Body of pancreas (tissue), 4 donors: ENCODE measurements at regions of chr14 and their contacts with region 1.

Region 1: GRCh38 chr14:100239840-100240724 is 1.1 kb downstream of the YY1 start:
- DNase-seq: peak; percentile 85 to 92 (median 89)
- ATAC-seq: peak; percentile 64
- H3K4me3 ChIP-seq: peak overlapping the region; percentile 92 to 98
- H3K27ac ChIP-seq: peak overlapping the region; percentile 95 to 100 (median 96)
- H3K4me1 ChIP-seq: peaks cover 52% of the 10 kb centered on the region
- H3K27me3 ChIP-seq: no peaks in the 10 kb centered on the region
- CTCF ChIP-seq: peak; percentile 49 to 92 (median 75)
- POLR2A ChIP-seq: peak; percentile 19 to 68 (median 58)

Region 2: GRCh38 chr14:99821519-99822508 is 418.3 kb before region 1 on chr14:
- intact Hi-C with region 1: no loop called
- DNase-seq: peak in 1 of 4 donors; percentile 19
- ATAC-seq: peak; percentile 38
- H3K4me3 ChIP-seq: no peak overlapping the region
- H3K27ac ChIP-seq: no peak overlapping the region
- H3K4me1 ChIP-seq: peaks cover 4% of the 10 kb centered on the region
- H3K27me3 ChIP-seq: no peaks in the 10 kb centered on the region
- CTCF ChIP-seq: no peak
- POLR2A ChIP-seq: no peak

Region 3: DNA sequence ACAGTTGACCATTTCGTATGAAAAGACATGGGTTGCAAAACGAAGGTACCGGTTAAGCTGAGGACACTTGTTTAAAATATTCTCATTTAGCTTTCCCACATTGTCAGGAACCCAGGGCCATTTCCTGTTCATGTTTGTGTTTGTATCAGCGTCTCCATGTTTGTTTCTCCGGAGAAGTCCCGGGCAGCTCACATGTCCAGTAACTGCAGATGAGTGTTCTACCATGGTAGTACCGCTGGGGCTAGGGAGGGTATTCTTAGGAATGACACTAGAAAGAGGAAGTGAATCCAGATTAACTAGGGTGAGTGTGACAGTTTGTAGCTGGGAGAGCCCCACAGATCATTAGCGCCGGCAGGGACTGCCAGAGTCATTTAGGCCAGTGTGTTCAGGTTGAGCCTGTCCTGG is 224.8 kb before region 1 on chr14:
- intact Hi-C with region 1: no loop called
- DNase-seq: peak in 1 of 4 donors; percentile 7
- ATAC-seq: no peak
- H3K4me3 ChIP-seq: no peak overlapping the region
- H3K27ac ChIP-seq: no peak overlapping the region
- H3K4me1 ChIP-seq: peaks cover 16% of the 10 kb centered on the region
- H3K27me3 ChIP-seq: no peaks in the 10 kb centered on the region
- CTCF ChIP-seq: no peak
- POLR2A ChIP-seq: no peak

Region 4: DNA sequence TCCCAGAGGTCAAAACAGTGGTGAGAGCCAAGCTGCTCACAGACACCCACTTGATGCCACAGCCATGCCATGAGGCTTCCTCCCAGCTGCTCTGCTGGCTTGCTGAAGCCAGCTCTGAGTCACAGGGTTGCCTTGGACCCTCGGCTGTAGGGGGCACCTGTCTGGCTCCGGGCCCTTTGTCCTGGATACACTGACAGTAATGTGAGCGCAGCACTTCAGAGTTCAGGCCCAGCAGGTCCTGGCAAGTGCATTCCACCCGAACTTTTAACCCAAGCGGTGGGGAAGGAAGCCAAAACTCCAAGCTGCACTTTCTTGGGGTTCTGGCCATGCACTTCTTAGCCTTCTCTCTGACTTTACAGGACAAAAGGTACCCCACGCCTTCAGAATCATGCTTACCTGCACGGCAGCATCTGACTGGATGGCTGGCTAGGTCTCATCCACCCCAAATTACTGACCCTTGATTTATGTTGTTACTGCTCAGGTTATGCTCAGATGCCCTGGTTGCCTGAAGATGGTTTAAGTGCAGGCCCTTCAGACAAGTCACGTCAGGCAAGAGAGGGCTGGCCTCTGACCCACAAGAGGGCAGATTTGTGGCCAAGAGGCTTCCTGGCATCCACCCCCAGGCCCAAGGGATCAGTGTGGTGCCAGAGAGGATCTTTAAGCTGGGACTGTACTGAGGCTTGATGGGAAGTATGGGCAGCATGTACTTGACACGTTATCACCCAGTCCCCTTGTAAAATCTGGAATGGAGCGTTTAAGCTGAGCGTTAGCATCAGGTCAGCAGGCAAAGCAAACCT is 41.4 kb after region 1 on chr14:
- intact Hi-C with region 1: loop called (anchors 5 kb)
- DNase-seq: no peak
- ATAC-seq: no peak
- H3K4me3 ChIP-seq: no peak overlapping the region
- H3K27ac ChIP-seq: no peak overlapping the region
- H3K4me1 ChIP-seq: peaks cover 19% of the 10 kb centered on the region
- H3K27me3 ChIP-seq: no peaks in the 10 kb centered on the region
- CTCF ChIP-seq: no peak
- POLR2A ChIP-seq: no peak